ENCODE measurements at regions of chr21 and their contacts with region 1.

Region 1: GRCh38 chr21:37563641-37564340 is 197.2 kb downstream of the DYRK1A start:
- DNase-seq: peak; percentile 85
- H3K4me3 ChIP-seq: peak overlapping the region; percentile 81
- H3K27ac ChIP-seq: peak overlapping the region; percentile 99
- H3K27me3 ChIP-seq: peaks cover 2% of the 10 kb centered on the region
- CTCF ChIP-seq: peak; percentile 41

Region 2: GRCh38 chr21:37267269-37268184 is 296.3 kb before region 1 on chr21 and contains the start of gene VPS26C:
- CTCF ChIA-PET with region 1: no interaction called
- POLR2A ChIA-PET with region 1: interaction called, 16 read pairs
- DNase-seq: peak; percentile 99
- H3K4me3 ChIP-seq: peak within 1 kb of the TSS; percentile 85
- H3K27ac ChIP-seq: peak within 1 kb of the TSS; percentile 100
- H3K27me3 ChIP-seq: no peaks in the 10 kb centered on the region
- CTCF ChIP-seq: no peak
- polyA plus RNA-seq, gene VPS26C: 42.7 and 45.6 TPM in 2 replicates

Region 3: DNA sequence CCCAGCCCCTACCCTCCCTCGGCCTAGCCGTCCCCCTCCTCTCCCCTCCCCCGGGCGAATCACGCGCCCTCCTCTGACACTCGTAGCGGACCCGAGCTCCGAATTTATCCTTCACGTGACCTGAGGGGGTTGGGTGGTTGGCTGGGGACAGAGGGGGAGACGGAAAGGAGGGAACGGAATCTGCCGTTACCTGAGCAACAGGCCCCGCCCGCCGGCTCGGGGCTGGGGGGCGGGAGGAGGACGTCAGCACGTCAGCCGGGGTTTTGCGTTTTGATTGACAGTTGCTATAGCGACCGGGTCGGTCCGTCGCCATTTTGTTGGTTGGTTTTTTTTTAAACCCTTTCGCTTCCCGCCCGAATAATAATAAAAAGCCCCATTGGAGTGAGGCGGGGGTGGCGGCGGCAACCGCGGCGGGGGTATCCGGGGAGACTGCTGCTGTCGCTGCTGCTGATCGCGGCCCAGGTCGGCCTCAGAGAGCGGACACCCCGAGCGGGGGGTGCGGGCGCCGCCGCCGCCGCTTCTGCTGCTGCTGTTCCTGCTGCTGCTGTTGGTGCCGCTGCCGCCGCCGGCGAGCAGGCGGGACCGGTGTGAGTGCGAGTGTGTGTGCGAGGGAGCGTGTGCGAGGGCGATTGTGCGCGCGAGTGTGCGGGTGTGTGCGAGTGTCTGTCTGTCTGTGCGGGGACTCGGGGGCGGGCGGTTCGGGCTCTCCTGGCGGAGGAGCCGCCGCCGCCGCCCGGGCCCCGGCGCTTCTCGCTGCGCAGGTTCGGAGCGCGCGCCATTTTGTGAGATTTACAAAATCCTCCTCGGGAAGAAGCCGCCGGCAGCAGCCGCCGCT is 197.1 kb before region 1 on chr21 and contains the start of gene DYRK1A:
- CTCF ChIA-PET with region 1: no interaction called
- POLR2A ChIA-PET with region 1: interaction called, 12 read pairs
- DNase-seq: peak; percentile 99
- H3K4me3 ChIP-seq: peak within 1 kb of the TSS; percentile 84
- H3K27ac ChIP-seq: peak within 1 kb of the TSS; percentile 93
- H3K27me3 ChIP-seq: no peaks in the 10 kb centered on the region
- CTCF ChIP-seq: no peak
- polyA plus RNA-seq, gene DYRK1A: 32.6 and 33.1 TPM in 2 replicates

Region 4: DNA sequence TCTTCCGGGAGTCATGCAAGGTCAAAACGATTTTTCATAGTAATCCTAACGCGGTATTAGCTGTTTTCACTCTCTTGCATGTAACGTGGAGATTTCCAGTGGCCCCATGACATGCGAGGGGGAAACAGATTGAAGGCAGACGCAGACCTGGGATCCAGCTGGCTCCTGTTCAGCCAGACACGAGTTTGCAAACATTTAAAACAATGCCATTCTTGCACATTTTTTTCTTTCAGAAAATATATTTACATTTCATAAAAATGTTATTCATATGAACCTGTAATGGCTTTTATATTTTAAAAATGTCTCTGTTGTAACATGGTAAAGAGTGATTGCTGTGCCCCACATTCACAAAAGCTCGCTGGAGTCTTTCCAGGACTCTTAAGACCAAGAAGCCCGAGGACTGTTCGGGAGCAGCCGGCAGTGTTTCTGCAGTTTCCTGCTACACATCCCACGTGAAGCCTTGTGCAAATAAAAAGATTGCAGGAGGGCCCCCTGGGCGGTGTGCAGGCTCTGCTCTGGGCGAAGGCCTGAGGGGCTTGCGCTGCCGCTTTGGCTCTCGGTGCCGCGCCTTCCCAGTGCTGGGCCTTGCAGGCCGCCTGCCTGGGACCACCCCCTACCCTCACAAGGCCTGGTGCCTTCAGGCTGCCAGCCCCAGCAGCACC is 12.3 kb before region 1 on chr21:
- CTCF ChIA-PET with region 1: interaction called, 3 read pairs
- POLR2A ChIA-PET with region 1: interaction called, 11 read pairs
- DNase-seq: no peak
- H3K4me3 ChIP-seq: no peak overlapping the region
- H3K27ac ChIP-seq: no peak overlapping the region
- H3K27me3 ChIP-seq: peaks cover 9% of the 10 kb centered on the region
- CTCF ChIP-seq: no peak

Region 5: DNA sequence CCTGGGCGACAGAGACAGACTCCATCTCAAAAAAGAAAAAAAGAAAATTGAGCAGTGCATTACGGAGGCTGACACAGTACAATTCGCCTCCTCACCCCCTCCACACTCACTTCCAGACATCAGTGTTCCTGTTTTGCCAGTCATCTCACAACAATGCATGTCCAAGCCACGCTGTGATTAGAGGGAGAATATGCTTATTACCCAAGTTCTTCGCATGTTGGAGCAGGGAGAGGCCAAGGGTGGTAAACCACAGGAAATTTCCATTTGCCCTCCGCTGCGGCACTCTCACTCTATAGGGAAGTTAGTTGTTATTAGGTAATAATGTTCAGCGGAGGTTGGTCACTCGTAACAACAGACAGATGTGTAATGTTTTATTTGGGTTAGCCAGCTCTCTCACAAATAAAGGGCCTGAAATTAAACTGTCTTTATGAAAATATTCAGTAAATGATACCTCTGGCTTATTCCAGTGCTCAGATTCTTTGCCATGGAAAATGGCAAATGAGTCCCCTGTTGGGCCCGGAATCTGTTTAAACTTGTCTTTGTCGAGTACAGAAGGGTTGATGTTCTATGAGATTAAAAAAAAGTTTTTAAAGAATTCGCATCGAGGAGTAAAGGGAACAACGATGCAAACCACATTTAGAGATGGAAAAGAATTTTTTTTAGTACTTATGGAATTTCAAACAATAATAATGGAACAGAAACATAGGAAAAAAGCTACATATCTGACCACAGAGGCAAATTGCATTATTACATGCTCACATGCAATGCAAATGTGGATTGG is 726.1 kb after region 1 on chr21:
- CTCF ChIA-PET with region 1: no interaction called
- POLR2A ChIA-PET with region 1: interaction called, 11 read pairs
- DNase-seq: peak; percentile 83
- H3K4me3 ChIP-seq: no peak overlapping the region
- H3K27ac ChIP-seq: peak overlapping the region; percentile 42
- H3K27me3 ChIP-seq: no peaks in the 10 kb centered on the region
- CTCF ChIP-seq: no peak